ENCODE measurements at regions of chr3 and their contacts with region 1.

Region 1: GRCh38 chr3:7042233-7042632 is 181.3 kb downstream of the GRM7 start:
- DNase-seq: no peak
- ATAC-seq: no peak
- H3K4me3 ChIP-seq: no peak overlapping the region
- H3K27ac ChIP-seq: no peak overlapping the region
- H3K4me1 ChIP-seq: no peaks in the 10 kb centered on the region
- H3K27me3 ChIP-seq: no peaks in the 10 kb centered on the region
- CTCF ChIP-seq: no peak
- POLR2A ChIP-seq: no peak
- RAD21 ChIP-seq: no peak

Region 2: DNA sequence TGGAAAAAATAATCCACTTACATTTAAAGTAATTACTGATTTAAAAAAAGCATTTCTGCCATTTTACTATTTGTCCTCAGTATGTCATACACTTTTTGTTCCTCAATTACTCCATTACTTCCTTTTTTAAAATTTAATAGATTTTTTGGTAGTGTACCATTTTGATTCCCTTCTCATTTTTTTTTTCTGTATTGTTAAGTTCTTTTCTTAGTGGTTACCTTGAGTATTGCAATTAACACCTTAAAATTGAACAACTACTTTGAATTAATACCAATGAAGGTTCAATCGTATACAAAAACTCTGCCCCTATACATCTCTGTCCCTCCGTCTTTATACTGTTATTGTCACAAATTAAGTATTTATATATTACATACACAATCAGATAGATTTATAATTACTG is 1218.8 kb after region 1 on chr3:
- CTCF ChIA-PET with region 1: no interaction called
- POLR2A ChIA-PET with region 1: no interaction called
- RAD21 ChIA-PET with region 1: no interaction called
- intact Hi-C with region 1: loop called (anchors 5 kb)
- DNase-seq: no peak
- ATAC-seq: no peak
- H3K4me3 ChIP-seq: no peak overlapping the region
- H3K27ac ChIP-seq: no peak overlapping the region
- H3K4me1 ChIP-seq: no peaks in the 10 kb centered on the region
- H3K27me3 ChIP-seq: 0 out of 2 replicates have a peak, but pooled peaks cover 5% of the 10 kb centered on the region
- CTCF ChIP-seq: 0 out of 6 replicates have a peak, but pooled peaks of 1 of the 3 experiments have one; percentile 23
- POLR2A ChIP-seq: no peak
- RAD21 ChIP-seq: no peak

Measured in HCT116 (cell line).